ENCODE measurements at regions of chr13 and their contacts with region 1.

Region 1: GRCh38 chr13:106997696-106998095 is 429.8 kb upstream of the ARGLU1 start:
- DNase-seq: no peak
- H3K4me3 ChIP-seq: no peak overlapping the region
- H3K27ac ChIP-seq: no peak overlapping the region
- H3K4me1 ChIP-seq: no peaks in the 10 kb centered on the region
- H3K27me3 ChIP-seq: no peaks in the 10 kb centered on the region; the same call in 1 of the 2 replicates
- CTCF ChIP-seq: no peak

Region 2: DNA sequence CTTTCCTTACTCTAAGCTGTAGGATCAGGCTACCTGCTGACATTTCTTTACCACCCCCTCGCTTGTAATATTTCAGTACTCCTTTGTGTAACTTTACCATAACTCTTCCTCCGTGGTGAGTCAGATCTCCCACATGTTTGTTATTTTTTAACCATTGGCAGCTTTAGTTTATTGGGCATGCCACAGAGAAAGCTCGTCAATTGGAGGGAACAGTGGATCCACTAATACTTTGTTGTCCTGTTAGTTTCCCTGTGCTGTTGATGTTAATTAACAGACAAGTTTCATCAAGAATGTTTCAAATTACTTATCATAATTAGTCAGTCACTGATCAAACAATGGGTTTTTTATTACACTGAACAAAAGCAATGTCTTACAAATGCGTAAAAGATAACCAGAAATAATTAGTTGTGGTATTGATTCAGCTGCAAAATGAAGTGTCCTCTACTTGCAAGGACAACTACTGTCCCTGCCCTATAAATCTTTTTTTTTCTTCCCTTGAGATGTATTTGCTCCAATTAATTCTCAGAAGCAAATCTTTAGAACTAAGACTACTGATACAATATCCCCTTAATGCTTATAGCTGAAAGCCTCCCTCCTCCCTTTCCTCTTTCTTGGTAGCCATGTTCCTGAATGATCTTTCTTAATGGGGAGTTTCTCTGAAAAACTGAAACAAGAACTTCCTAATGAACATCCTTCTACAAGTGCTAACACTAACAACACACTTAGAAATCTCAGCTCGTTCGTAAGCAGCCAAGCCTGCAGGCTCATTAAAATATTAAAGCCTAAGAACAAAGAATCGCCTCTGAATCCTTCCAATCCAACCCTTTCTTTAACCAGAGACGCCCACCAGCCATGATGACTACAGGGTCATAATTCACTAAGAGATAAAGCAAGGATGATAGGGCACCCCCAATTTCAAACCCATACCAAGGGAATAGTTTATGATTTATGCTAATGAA is 484.4 kb before region 1 on chr13:
- CTCF ChIA-PET with region 1: no interaction called
- POLR2A ChIA-PET with region 1: interaction called, 11 read pairs
- intact Hi-C with region 1: no loop called
- DNase-seq: no peak
- H3K4me3 ChIP-seq: no peak overlapping the region
- H3K27ac ChIP-seq: peak overlapping the region; percentile 2; the same call in 1 of the 2 replicates
- H3K4me1 ChIP-seq: peaks cover 15% of the 10 kb centered on the region
- H3K27me3 ChIP-seq: no peaks in the 10 kb centered on the region
- CTCF ChIP-seq: no peak

Region 3: DNA sequence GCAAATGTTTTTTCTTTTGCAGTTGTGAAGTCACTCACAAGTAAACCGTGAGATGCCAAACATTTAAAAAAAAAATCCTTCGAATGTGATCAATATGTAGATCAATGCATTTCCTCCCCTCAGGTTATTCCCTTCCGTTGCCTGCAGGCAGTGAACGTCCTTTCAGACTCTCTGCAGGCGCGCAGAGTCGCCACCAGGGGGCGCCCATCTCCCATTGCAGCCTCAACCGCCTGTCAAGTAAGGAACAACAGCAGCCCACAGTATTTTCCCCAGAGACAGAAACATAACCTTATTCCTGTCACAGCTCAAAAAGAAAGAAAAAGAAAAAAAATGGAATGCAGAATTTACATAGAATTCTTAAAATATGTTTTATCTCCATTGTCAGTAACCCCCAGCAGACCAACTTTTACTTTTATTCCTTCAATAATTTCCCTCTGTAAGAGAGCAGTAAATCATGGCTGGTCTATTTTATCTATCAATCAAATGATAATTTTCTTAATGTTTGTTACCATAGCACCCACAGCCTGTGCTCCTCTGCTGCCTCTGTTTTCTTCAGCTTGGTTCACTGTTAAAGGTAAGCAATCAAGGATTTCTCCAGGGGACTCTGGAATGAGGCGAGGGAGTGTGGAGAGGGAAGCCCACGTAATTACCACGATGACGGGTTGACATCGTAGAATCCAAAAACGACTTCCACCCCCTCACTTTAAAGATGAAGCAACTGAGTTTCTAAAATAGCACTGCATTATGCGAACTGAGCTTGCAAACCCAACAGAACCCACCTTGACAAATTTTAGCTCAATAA is 207.8 kb after region 1 on chr13:
- CTCF ChIA-PET with region 1: no interaction called
- POLR2A ChIA-PET with region 1: no interaction called
- intact Hi-C with region 1: no loop called
- DNase-seq: peak; percentile 39 to 58
- H3K4me3 ChIP-seq: no peak overlapping the region
- H3K27ac ChIP-seq: no peak overlapping the region
- H3K4me1 ChIP-seq: no peaks in the 10 kb centered on the region
- H3K27me3 ChIP-seq: no peaks in the 10 kb centered on the region
- CTCF ChIP-seq: peak; percentile 99

Measured in PC-9 (cell line).